Sciatic nerve (tissue), 2 donors: ENCODE measurements at regions of chr9 and their contacts with region 1.

Region 1: DNA sequence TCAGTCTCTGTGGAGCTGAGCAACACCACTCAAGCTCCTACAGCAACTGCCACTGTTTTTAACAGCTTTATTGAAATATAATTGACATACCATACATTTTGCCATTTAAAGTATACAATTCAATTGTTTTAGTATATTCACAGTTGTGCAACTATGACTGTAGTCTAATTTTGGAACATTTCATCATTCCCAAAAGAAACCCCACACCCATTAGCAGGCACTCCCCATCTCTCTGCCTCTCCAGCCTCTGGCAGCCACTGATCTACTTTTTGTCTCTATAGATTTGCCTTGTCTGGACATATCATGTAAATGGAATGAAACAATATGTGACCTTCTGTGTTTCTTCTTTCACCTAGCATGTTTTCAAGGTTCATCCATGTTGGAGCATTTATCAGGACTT is 43.5 kb downstream of the RUSC2 start:
- DNase-seq: no peak
- ATAC-seq: no peak

Region 2: GRCh38 chr9:35553670-35554543 is 20.5 kb after region 1 on chr9:
- intact Hi-C with region 1: no loop called
- DNase-seq: no peak
- ATAC-seq: peak; percentile 89

Region 3: GRCh38 chr9:35569206-35569605 is 35.8 kb after region 1 on chr9:
- intact Hi-C with region 1: loop called (anchors 2 kb)
- DNase-seq: no peak
- ATAC-seq: no peak

Region 4: GRCh38 chr9:35646533-35647265 is 113.3 kb after region 1 on chr9:
- intact Hi-C with region 1: no loop called
- DNase-seq: peak; percentile 97
- ATAC-seq: peak; percentile 96

Region 5: GRCh38 chr9:36316584-36317317 is 783.4 kb after region 1 on chr9:
- intact Hi-C with region 1: no loop called
- DNase-seq: no peak
- ATAC-seq: peak; percentile 84